ENCODE measurements at regions of chr14 and their contacts with region 1.

Region 1: GRCh38 chr14:30994681-30995620 is 30.5 kb upstream of the AP4S1 start:
- DNase-seq: peak; percentile 66
- H3K4me3 ChIP-seq: no peak overlapping the region
- H3K27ac ChIP-seq: peak overlapping the region; percentile 55
- H3K4me1 ChIP-seq: peaks cover 21% of the 10 kb centered on the region
- H3K27me3 ChIP-seq: no peaks in the 10 kb centered on the region
- CTCF ChIP-seq: no peak
- POLR2A ChIP-seq: no peak

Region 2: DNA sequence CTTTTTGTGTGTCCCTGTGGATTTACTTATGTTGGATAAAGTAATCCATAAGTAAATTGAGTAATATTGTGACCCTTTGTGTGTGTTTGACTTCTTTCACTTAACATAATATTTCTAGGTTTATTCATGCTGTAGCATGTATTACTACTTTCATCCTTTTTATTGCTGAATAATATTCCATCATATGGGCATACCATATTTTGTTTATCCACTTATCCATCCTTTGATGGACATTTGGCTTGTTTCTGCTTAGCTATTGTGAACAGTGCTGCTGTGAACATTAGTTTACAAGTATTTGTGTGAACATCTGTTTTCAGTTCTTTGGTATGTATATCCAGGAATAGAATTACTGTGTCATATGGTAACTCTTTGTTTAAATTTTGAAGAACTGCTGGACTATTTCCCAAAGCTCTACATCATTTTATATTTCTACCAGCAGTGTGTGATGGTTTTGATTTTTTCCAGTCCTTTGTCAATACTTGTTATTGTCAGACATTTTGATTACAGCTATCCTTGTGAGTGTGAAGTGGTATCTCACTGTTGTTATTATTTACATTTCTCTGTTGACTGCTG is 410.8 kb before region 1 on chr14:
- CTCF ChIA-PET with region 1: no interaction called
- POLR2A ChIA-PET with region 1: no interaction called
- dilution Hi-C with region 1: no loop called
- intact Hi-C with region 1: no loop called
- DNase-seq: no peak
- H3K4me3 ChIP-seq: no peak overlapping the region
- H3K27ac ChIP-seq: no peak overlapping the region
- H3K4me1 ChIP-seq: no peaks in the 10 kb centered on the region
- H3K27me3 ChIP-seq: no peaks in the 10 kb centered on the region
- CTCF ChIP-seq: no peak
- POLR2A ChIP-seq: no peak

Region 3: GRCh38 chr14:30949651-30950050 is 45.3 kb before region 1 on chr14:
- CTCF ChIA-PET with region 1: no interaction called
- POLR2A ChIA-PET with region 1: no interaction called
- dilution Hi-C with region 1: no loop called
- intact Hi-C with region 1: loop called (anchors 2 kb)
- DNase-seq: peak; percentile 37
- H3K4me3 ChIP-seq: no peak overlapping the region
- H3K27ac ChIP-seq: no peak overlapping the region
- H3K4me1 ChIP-seq: no peaks in the 10 kb centered on the region
- H3K27me3 ChIP-seq: no peaks in the 10 kb centered on the region
- CTCF ChIP-seq: no peak
- POLR2A ChIP-seq: no peak